Right cardiac atrium (tissue), 5 donors: ENCODE measurements at regions of chr21 and their contacts with region 1.

Region 1: GRCh38 chr21:31107871-31108270 is 69.6 kb upstream of the KRTAP19-8 start:
- DNase-seq: no peak
- ATAC-seq: peak in 1 of 2 donors; percentile 51
- H3K4me3 ChIP-seq: no peak overlapping the region
- H3K27ac ChIP-seq: no peak overlapping the region
- H3K4me1 ChIP-seq: no peaks in the 10 kb centered on the region
- H3K27me3 ChIP-seq: no peaks in the 10 kb centered on the region

Region 2: DNA sequence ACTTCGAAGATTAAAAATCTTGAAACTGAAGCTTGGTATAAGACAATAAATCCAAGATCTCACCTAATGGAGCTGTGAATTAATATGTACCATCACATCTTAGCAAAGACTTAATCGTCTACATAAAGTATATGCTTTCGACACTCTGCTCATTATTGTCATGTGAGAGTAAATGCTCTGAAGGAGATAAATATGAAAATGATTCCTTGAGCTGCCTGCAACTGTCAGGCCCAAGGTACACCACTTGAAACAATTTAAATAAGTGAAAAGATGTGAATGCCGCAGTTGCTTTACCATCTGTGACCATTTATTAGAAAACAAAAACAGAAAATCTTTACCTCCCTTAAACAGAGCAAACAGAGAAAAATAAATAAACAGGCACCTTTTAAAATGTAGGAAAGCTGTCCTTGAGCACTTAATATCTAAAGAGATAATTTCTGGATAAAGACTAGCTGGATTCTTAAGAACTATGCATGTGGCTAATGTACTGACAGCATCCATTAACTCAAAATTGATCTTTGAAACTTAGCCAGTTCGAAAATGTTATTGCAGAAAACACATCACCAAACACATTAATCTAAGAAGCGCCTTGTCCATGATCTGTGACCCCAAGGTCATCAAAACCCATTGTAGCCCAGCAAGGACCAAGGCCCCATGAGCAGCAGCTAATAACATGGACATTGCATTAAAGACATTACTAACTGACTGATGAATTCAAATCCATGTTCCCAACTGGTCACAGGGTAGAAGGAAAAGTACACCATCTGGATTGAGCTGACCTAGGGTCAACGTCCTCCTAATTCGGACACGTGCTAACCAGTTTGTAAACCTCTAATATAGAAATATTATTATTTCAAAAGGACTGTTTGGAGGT is 260.0 kb before region 1 on chr21:
- intact Hi-C with region 1: no loop called
- DNase-seq: no peak
- ATAC-seq: no peak
- H3K4me3 ChIP-seq: no peak overlapping the region
- H3K27ac ChIP-seq: no peak overlapping the region
- H3K4me1 ChIP-seq: no peaks in the 10 kb centered on the region
- H3K27me3 ChIP-seq: no peaks in the 10 kb centered on the region

Region 3: DNA sequence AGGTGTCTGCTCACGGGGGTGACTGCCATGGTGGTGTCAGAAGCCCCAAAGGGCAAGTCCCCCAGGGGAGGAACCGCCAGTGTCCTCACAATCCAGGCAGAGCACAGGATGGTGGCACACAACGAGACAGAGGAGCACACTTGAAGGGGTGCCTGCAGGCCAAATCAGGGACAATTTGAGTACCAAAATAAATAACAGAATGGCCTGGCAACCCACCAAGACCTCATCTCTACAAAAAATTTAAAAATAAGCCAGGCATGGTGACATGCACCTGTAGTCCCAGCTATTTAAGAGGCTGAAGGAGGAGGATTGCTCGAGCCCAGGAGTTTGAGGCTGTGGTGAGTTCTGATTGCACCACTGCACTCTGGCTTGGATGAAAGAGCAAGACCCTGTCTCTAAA is 198.0 kb after region 1 on chr21:
- intact Hi-C with region 1: no loop called
- DNase-seq: no peak
- ATAC-seq: no peak
- H3K4me3 ChIP-seq: no peak overlapping the region
- H3K27ac ChIP-seq: no peak overlapping the region
- H3K4me1 ChIP-seq: no peaks in the 10 kb centered on the region
- H3K27me3 ChIP-seq: no peaks in the 10 kb centered on the region

Region 4: DNA sequence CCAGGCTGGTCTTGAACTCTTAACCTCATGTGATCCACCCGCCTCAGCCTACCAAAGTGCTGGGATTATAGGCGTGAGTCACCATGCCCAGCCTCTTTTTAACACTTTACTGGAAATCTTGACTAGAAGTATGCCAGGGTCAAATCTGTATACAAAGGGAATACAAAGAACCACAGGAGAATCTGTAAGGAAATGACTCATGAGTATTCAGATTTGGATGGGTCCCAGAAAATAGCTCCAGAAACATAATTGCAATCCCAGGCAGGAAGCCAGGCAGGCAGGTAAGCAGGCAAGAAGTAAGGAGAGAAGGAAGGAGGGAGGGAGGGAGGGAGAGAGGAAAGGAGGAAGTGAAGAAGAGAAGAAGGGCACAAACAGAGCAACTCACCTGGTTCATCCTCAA is 259.0 kb after region 1 on chr21:
- intact Hi-C with region 1: no loop called
- DNase-seq: no peak
- ATAC-seq: no peak
- H3K4me3 ChIP-seq: no peak overlapping the region
- H3K27ac ChIP-seq: no peak overlapping the region
- H3K4me1 ChIP-seq: no peaks in the 10 kb centered on the region
- H3K27me3 ChIP-seq: no peaks in the 10 kb centered on the region

Region 5: GRCh38 chr21:31604591-31605190 is 496.8 kb after region 1 on chr21:
- intact Hi-C with region 1: loop called in 2 of 4 experiments (anchors 10 kb)
- DNase-seq: peak; percentile 70 to 86 (median 79)
- ATAC-seq: peak; percentile 67 to 72
- H3K4me3 ChIP-seq: no peak overlapping the region
- H3K27ac ChIP-seq: no peak overlapping the region
- H3K4me1 ChIP-seq: no peaks in the 10 kb centered on the region
- H3K27me3 ChIP-seq: no peaks in the 10 kb centered on the region